PC-3 (cell line): ENCODE measurements at regions of chr5 and their contacts with region 1.

Region 1: DNA sequence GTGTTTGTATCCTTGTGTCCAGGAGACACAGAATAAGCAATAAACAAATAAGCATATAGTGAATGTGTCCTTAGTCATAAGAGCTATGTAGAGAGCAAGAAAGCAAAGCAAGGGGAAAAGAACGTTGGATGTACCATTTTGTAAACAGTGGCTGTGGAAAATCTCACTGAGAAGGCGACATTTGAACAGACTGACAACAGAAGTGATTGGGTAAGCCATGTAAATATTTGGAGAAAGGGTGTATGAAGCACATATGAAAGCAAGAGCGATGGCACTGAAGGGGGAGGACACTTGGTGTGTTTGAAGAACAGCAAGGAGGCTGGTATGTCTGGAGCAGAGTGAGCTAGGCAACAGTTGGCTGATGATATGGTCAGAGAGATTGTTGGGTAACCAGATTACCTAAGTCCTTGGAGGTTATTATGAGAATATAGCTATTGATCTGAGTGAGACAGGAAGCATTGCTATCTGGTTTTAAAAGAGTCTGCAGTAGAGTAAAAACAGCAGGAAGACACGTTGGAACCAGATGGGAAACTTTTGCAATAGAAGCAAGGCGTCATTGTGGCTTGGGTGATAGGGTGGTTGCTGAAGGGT is 115.5 kb upstream of the IL7R start:
- DNase-seq: peak; percentile 65
- ATAC-seq: peak; percentile 62
- H3K4me3 ChIP-seq: peak overlapping the region; percentile 7; the same call in 1 of the 2 replicates
- H3K27ac ChIP-seq: peak overlapping the region; percentile 90
- H3K4me1 ChIP-seq: peaks cover 23% of the 10 kb centered on the region
- H3K27me3 ChIP-seq: no peaks in the 10 kb centered on the region
- CTCF ChIP-seq: no peak

Region 2: DNA sequence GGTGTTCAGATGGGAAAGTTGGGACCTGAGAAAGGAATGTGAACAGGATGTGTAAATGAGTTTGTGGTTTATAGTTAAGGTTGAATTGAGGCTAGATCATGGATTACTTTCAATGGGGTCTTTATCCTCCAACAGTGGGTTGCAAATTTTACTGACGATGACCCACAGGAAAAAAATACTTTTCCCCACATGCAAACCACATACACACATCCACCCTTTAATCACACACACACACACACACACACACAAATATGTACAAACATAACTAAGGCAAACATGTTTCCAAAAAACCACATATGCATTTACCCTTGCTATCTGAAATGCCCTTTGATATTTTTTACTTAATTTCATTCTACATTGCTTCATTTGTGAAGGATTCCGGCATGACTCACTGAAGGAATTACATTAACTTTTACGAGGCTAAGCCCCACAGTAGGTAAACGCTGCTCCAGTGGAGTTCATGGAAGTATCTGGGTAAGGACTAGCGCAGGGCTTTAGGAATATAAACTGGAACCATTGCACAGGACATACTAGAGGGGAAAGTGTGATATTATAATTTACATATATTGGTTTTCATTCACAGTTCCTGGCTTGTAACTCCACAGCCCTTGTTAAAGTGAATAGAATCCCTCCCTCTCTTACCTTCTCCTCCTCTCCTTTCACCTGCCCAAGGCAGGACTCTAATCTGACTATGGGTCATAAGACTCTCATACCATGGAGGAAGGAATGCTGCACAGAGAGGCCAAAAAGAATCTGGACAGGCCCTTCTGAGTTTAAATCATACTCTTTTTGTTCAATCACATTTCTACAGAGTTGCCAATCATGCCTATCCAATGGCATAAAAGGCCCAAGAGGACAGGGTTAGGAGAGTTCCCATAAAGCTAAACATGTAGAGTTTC is 132.1 kb before region 1 on chr5:
- CTCF ChIA-PET with region 1: no interaction called
- POLR2A ChIA-PET with region 1: no interaction called
- intact Hi-C with region 1: loop called (anchors 2 kb)
- DNase-seq: peak; percentile 90
- ATAC-seq: peak; percentile 99
- H3K4me3 ChIP-seq: peak overlapping the region; percentile 13; the same call in 1 of the 2 replicates
- H3K27ac ChIP-seq: peak overlapping the region; percentile 67
- H3K4me1 ChIP-seq: peaks cover 19% of the 10 kb centered on the region
- H3K27me3 ChIP-seq: no peaks in the 10 kb centered on the region
- CTCF ChIP-seq: no peak

Region 3: DNA sequence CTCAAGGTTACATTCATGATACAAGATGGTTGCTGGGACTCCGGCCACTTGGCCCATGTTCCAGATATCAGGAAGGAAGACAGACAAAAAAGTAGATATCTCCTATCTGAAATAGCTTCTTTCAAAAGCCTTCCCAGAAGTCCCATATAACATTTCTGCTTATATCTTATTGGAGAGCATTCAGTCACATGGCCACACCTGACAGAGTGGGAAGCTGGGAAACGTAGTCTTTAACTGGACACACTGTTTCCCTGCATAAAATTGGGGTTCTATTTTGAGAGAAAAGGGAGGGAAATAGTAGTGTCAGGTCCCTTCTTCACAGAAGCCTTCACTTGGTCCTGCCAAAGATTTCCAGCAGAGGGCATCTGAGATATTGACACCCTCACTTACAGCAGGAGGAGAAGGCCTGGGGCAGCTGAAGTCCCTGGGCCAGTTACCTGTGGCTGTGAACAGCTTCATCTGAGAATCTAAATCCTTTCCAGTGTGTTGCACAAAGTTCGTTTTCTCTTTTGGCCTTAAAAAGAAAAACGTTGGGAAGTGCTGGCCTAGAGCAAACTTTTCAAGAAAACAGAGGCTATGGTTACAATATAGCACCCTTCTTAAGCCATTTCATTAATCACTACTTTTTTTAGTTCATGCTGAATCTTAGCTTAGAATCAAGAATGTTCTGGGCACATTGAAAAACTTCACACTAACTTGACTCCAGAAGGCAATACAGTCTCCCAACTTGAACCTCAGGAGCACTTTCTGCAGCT is 90.0 kb before region 1 on chr5:
- CTCF ChIA-PET with region 1: interaction called, 3 read pairs
- POLR2A ChIA-PET with region 1: no interaction called
- intact Hi-C with region 1: loop called (anchors 10 kb)
- DNase-seq: peak; percentile 82
- ATAC-seq: peak; percentile 99
- H3K4me3 ChIP-seq: no peak overlapping the region
- H3K27ac ChIP-seq: no peak overlapping the region
- H3K4me1 ChIP-seq: no peaks in the 10 kb centered on the region
- H3K27me3 ChIP-seq: no peaks in the 10 kb centered on the region
- CTCF ChIP-seq: peak; percentile 88

Region 4: GRCh38 chr5:35717718-35718117 is 23.5 kb before region 1 on chr5:
- CTCF ChIA-PET with region 1: no interaction called
- POLR2A ChIA-PET with region 1: no interaction called
- intact Hi-C with region 1: loop called (anchors 1 kb)
- DNase-seq: no peak
- ATAC-seq: no peak
- H3K4me3 ChIP-seq: no peak overlapping the region
- H3K27ac ChIP-seq: no peak overlapping the region
- H3K4me1 ChIP-seq: no peaks in the 10 kb centered on the region
- H3K27me3 ChIP-seq: no peaks in the 10 kb centered on the region
- CTCF ChIP-seq: no peak